Activated CD4-positive, alpha-beta memory T cell treated with anti-CD3 and anti-CD28 coated beads for 36 hours (primary cell): ENCODE measurements at regions of chr12 and their contacts with region 1.

Region 1: DNA sequence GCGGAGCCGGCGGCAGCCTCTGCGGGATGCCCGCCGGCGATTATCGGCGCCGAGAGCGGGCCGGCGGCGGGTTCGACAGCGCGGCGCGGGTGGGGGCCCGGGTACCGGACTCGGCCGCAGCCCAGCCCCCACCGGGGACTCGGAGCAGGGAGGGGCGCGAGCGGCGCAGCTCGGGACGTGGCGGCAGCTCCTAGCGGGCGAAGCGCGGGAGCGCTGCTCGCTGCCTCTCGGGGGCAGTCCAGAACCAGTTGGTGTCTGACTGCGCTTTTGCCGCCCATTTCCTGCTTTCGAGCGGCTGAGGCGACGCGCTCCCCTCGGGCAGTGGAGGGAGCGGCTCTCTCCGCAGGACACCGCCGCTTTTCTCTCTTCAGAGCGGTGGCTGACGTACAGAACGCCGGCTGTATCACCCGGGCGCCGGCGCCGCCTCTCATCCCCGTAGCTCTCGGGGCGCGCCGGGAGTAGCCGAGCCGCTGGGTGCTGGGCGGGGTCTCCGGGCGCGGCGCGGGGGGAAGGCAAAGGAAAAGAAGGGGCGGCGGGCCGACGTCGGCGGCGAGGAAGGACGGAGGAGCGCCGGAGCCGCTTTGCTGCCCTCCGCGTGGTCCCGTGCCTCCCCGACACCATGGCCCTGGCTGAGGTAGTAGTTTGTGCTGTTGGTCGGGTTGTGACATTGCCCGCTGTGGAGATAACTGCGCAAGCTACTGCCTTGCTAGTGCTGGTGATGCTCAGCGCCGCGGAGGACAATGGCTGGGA is 136.6 kb downstream of the MON2 start:
- DNase-seq: peak; percentile 85
- H3K4me3 Mint-ChIP-seq: peak overlapping the region; percentile 84
- H3K27ac Mint-ChIP-seq: peak overlapping the region; percentile 99
- H3K4me1 Mint-ChIP-seq: peaks cover 35% of the 10 kb centered on the region
- H3K27me3 Mint-ChIP-seq: no peaks in the 10 kb centered on the region

Region 2: GRCh38 chr12:62078020-62078419 is 525.2 kb before region 1 on chr12:
- CTCF ChIA-PET with region 1: no interaction called
- POLR2A ChIA-PET with region 1: no interaction called
- intact Hi-C with region 1: no loop called
- DNase-seq: no peak
- H3K4me3 Mint-ChIP-seq: no peak overlapping the region
- H3K27ac Mint-ChIP-seq: no peak overlapping the region
- H3K4me1 Mint-ChIP-seq: no peaks in the 10 kb centered on the region
- H3K27me3 Mint-ChIP-seq: peaks cover 2% of the 10 kb centered on the region

Region 3: GRCh38 chr12:62466594-62467491 is 136.4 kb before region 1 on chr12 and contains the start of gene MON2:
- CTCF ChIA-PET with region 1: no interaction called
- POLR2A ChIA-PET with region 1: interaction called, 14 read pairs
- intact Hi-C with region 1: loop called (anchors 1 kb)
- DNase-seq: peak; percentile 90
- H3K4me3 Mint-ChIP-seq: peak within 1 kb of the TSS; percentile 93
- H3K27ac Mint-ChIP-seq: peak within 1 kb of the TSS; percentile 88
- H3K4me1 Mint-ChIP-seq: peaks cover 22% of the 10 kb centered on the region
- H3K27me3 Mint-ChIP-seq: no peaks in the 10 kb centered on the region
- total RNA-seq, gene MON2: 29.2 to 35.1 TPM

Region 4: DNA sequence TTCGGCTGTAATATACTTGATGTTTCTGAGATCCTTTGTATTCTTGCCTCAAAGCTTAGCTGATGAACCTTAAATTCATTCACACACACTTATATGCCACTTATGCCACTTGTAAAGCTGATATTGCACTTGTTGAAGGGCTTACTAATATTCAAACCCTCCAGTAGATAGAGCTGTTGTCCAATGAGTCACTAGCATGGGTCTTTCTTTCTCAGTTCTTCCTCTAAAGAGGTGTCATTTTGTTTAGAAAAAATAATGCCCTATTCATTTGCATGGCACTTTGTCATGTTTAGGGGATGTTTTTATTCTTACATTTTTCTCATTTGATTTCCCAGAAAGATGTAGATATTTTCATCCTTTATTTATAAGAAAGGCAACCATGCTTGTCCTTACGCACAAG is 80.3 kb before region 1 on chr12:
- CTCF ChIA-PET with region 1: no interaction called
- POLR2A ChIA-PET with region 1: no interaction called
- intact Hi-C with region 1: loop called (anchors 2 kb)
- DNase-seq: no peak
- H3K4me3 Mint-ChIP-seq: no peak overlapping the region
- H3K27ac Mint-ChIP-seq: no peak overlapping the region
- H3K4me1 Mint-ChIP-seq: peaks cover 31% of the 10 kb centered on the region
- H3K27me3 Mint-ChIP-seq: no peaks in the 10 kb centered on the region

Region 5: DNA sequence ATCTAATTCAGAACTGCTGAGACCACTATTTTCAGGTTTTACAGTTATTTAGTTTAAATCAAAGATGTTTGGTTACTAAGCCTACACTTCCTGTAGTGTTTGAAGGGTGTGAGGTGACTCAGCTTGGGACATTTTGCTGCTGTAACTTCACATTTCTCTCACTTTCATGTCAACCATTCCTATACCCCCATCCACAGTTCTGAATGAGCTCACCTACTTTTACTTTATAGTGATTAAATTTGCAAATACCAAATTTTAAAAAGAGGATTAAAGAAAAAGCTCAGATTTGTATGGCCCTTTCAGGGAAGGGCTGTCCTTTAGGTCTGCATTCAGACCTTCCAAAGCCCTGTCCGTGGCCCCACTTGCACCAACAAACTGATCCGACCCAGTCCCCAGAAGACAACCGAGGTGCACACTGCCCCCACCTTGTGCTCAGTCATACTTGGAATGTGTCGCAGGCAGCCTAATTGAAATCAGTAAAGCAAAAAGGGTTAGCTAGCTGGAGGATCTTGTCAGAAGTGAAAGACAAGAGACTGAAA is 37.7 kb after region 1 on chr12:
- CTCF ChIA-PET with region 1: interaction called, 17 read pairs
- POLR2A ChIA-PET with region 1: interaction called, 28 read pairs
- intact Hi-C with region 1: loop called (anchors 1 kb)
- DNase-seq: peak; percentile 69
- H3K4me3 Mint-ChIP-seq: peak overlapping the region; percentile 44
- H3K27ac Mint-ChIP-seq: peak overlapping the region; percentile 61
- H3K4me1 Mint-ChIP-seq: peaks cover 22% of the 10 kb centered on the region
- H3K27me3 Mint-ChIP-seq: peaks cover 6% of the 10 kb centered on the region

Region 6: DNA sequence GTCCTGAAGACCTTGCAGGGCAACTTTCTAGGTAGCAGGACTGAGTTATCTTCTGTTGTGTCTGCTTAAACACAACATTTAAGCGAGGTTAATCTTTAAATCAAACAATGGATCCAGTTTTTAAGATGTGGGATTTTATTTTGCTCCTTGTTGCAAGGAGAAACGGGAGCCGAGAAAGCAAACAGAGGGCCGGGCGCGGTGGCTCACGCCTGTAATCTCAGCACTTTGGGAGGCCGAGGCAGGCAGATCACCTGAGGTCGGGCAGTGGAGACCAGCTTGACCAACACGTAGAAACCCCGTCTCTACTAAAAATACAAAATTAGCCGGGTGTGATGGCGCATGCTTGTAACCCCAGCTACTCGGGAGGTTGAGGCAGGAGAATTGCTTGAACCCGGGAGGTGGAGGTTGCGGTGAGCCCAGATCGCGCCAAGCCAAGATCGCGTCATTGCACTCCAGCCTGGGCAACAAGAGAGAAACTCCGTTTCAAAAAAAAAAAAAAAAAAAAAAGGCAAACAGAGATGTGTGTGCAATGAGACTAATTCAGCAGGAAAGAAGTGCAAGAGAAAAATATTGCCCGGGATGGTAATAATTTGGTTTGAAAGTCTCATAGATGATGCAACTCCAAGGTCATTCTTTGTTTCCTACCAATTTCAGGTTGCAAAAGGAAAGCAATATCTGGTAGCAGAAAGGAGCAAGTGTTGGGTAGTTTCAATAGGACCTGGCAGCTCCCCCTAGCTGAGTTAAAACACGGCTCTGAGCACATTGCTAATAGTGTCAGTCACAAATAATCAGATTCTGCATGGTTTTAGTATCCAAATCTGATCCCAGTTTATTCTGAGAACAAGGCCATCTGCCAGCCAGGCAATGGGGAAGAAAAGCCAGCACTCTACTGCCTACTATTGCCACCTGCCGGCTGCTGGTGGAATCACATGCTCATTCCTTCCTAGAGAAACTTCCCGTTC is 190.3 kb after region 1 on chr12:
- CTCF ChIA-PET with region 1: interaction called, 13 read pairs
- POLR2A ChIA-PET with region 1: no interaction called
- intact Hi-C with region 1: loop called (anchors 2 kb)
- DNase-seq: peak; percentile 82
- H3K4me3 Mint-ChIP-seq: no peak overlapping the region
- H3K27ac Mint-ChIP-seq: no peak overlapping the region
- H3K4me1 Mint-ChIP-seq: no peaks in the 10 kb centered on the region
- H3K27me3 Mint-ChIP-seq: peaks cover 4% of the 10 kb centered on the region

Region 7: DNA sequence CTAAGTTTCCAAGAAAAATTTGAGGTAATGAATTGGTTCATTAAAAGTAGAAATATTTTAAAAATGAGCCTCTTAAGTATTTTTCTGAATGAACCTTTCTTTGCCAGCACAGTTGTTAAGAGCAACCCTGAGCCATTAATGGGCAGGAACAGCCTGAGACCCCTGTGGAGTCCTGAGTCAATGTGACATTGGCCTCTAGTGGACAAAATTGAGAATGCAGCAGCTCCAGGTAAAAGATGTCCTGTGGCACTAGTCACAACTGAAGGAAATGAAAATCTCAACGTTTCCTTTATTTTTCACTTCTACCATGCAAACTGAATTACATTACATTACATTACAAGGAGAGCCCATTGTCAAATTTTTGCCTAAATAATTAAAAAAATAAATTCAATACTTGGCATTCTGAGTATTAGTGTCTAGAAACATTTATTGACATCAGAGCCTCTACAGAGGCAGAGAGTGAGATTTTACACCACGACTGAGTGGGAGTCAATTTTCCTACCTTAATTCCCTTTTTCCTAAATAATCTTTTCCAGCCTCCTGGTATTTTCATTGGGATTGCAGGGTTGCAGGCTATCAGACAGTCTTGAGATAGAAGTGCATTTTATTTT is 196.0 kb after region 1 on chr12:
- CTCF ChIA-PET with region 1: interaction called, 13 read pairs
- POLR2A ChIA-PET with region 1: no interaction called
- intact Hi-C with region 1: loop called (anchors 2 kb)
- DNase-seq: peak; percentile 48
- H3K4me3 Mint-ChIP-seq: no peak overlapping the region
- H3K27ac Mint-ChIP-seq: no peak overlapping the region
- H3K4me1 Mint-ChIP-seq: no peaks in the 10 kb centered on the region
- H3K27me3 Mint-ChIP-seq: peaks cover 4% of the 10 kb centered on the region